ENCODE measurements at regions of chr19 and their contacts with region 1.

Region 1: GRCh38 chr19:48637170-48637947 is at the start of gene DBP:
- DNase-seq: peak; percentile 91 to 100 (median 100)
- ATAC-seq: peak; percentile 83
- H3K4me3 ChIP-seq: peak within 1 kb of the TSS; percentile 89
- H3K4me3 Mint-ChIP-seq: peak within 1 kb of the TSS; percentile 87 to 100 (median 98)
- H3K27ac ChIP-seq: peak within 1 kb of the TSS; percentile 90
- H3K27ac Mint-ChIP-seq: peak within 1 kb of the TSS; percentile 97 to 100 (median 98)
- H3K4me1 ChIP-seq: peaks cover 33 to 38% of the 10 kb centered on the region in 2 donors
- H3K4me1 Mint-ChIP-seq: peaks cover 13 to 46% (median 41%) of the 10 kb centered on the region in 7 donors
- H3K27me3 ChIP-seq: no peaks in the 10 kb centered on the region
- H3K27me3 Mint-ChIP-seq: peaks cover 0 to 8% (median 0%) of the 10 kb centered on the region in 5 donors
- total RNA-seq, gene DBP: 11.9 to 79.9 (median 33.2) TPM

Region 2: GRCh38 chr19:48170038-48170812 is 467.1 kb before region 1 on chr19 and contains the starts of genes LIG1 and ZSWIM9:
- CTCF ChIA-PET with region 1: no interaction called
- POLR2A ChIA-PET with region 1: no interaction called
- intact Hi-C with region 1: loop called in 1 of 2 experiments (anchors 2 kb)
- DNase-seq: peak; percentile 87 to 96 (median 94)
- ATAC-seq: peak; percentile 89
- H3K4me3 ChIP-seq: peak within 1 kb of the TSS; percentile 98
- H3K4me3 Mint-ChIP-seq: peak within 1 kb of the TSS; percentile 90 to 100 (median 97)
- H3K27ac ChIP-seq: peak within 1 kb of the TSS; percentile 94
- H3K27ac Mint-ChIP-seq: peak within 1 kb of the TSS; percentile 92 to 100 (median 97)
- H3K4me1 ChIP-seq: peaks cover 14 to 16% of the 10 kb centered on the region in 2 donors
- H3K4me1 Mint-ChIP-seq: peaks cover 20 to 44% (median 32%) of the 10 kb centered on the region in 7 donors
- H3K27me3 ChIP-seq: no peaks in the 10 kb centered on the region
- H3K27me3 Mint-ChIP-seq: no peaks in the 10 kb centered on the region
- total RNA-seq, gene LIG1: 61.0 to 134 (median 122) TPM
- total RNA-seq, gene ZSWIM9: 5.0 to 11.6 (median 7.4) TPM

Region 3: GRCh38 chr19:48398375-48399235 is 238.8 kb before region 1 on chr19:
- CTCF ChIA-PET with region 1: no interaction called
- POLR2A ChIA-PET with region 1: no interaction called
- intact Hi-C with region 1: loop called in 1 of 2 experiments (anchors 1 kb)
- DNase-seq: peak; percentile 77 to 88 (median 86)
- ATAC-seq: peak; percentile 90
- H3K4me3 ChIP-seq: peak overlapping the region; percentile 63
- H3K4me3 Mint-ChIP-seq: peak overlapping the region; percentile 54 to 96 (median 79)
- H3K27ac ChIP-seq: peak overlapping the region; percentile 59
- H3K27ac Mint-ChIP-seq: peak overlapping the region; percentile 22 to 97 (median 85)
- H3K4me1 ChIP-seq: peaks cover 17 to 29% of the 10 kb centered on the region in 2 donors
- H3K4me1 Mint-ChIP-seq: peaks cover 18 to 51% (median 41%) of the 10 kb centered on the region in 7 donors
- H3K27me3 ChIP-seq: peaks cover 9 to 21% of the 10 kb centered on the region in 2 donors
- H3K27me3 Mint-ChIP-seq: peaks cover 15 to 43% (median 31%) of the 10 kb centered on the region in 5 donors

Region 4: GRCh38 chr19:48624067-48624594 is 13.2 kb before region 1 on chr19:
- CTCF ChIA-PET with region 1: interaction called, 4 read pairs
- POLR2A ChIA-PET with region 1: interaction called, 73 read pairs
- intact Hi-C with region 1: loop called (anchors 1 kb)
- DNase-seq: peak; percentile 83 to 97 (median 87)
- ATAC-seq: peak; percentile 86
- H3K4me3 ChIP-seq: peak overlapping the region; percentile 29
- H3K4me3 Mint-ChIP-seq: peak overlapping the region; percentile 76 to 98 (median 88)
- H3K27ac ChIP-seq: peak overlapping the region; percentile 73
- H3K27ac Mint-ChIP-seq: peak overlapping the region; percentile 86 to 99 (median 92)
- H3K4me1 ChIP-seq: peaks cover 14 to 24% of the 10 kb centered on the region in 2 donors
- H3K4me1 Mint-ChIP-seq: peaks cover 31 to 51% (median 44%) of the 10 kb centered on the region in 7 donors
- H3K27me3 ChIP-seq: no peaks in the 10 kb centered on the region
- H3K27me3 Mint-ChIP-seq: no peaks in the 10 kb centered on the region

Region 5: GRCh38 chr19:48872182-48872883 is 235.0 kb after region 1 on chr19 and contains the start of gene PPP1R15A:
- CTCF ChIA-PET with region 1: no interaction called
- POLR2A ChIA-PET with region 1: no interaction called
- intact Hi-C with region 1: loop called in 1 of 2 experiments (anchors 1 kb)
- DNase-seq: peak; percentile 96 to 99 (median 98)
- ATAC-seq: peak; percentile 58
- H3K4me3 ChIP-seq: peak within 1 kb of the TSS; percentile 86
- H3K4me3 Mint-ChIP-seq: peak within 1 kb of the TSS; percentile 94 to 100 (median 98)
- H3K27ac ChIP-seq: peak within 1 kb of the TSS; percentile 99
- H3K27ac Mint-ChIP-seq: peak within 1 kb of the TSS; percentile 94 to 100 (median 99)
- H3K4me1 ChIP-seq: peaks cover 34 to 36% of the 10 kb centered on the region in 2 donors
- H3K4me1 Mint-ChIP-seq: peaks cover 31 to 51% (median 41%) of the 10 kb centered on the region in 7 donors
- H3K27me3 ChIP-seq: no peaks in the 10 kb centered on the region
- H3K27me3 Mint-ChIP-seq: peaks cover 0 to 14% (median 0%) of the 10 kb centered on the region in 5 donors
- total RNA-seq, gene PPP1R15A: 31.5 to 1,030 (median 71.9) TPM

Region 6: DNA sequence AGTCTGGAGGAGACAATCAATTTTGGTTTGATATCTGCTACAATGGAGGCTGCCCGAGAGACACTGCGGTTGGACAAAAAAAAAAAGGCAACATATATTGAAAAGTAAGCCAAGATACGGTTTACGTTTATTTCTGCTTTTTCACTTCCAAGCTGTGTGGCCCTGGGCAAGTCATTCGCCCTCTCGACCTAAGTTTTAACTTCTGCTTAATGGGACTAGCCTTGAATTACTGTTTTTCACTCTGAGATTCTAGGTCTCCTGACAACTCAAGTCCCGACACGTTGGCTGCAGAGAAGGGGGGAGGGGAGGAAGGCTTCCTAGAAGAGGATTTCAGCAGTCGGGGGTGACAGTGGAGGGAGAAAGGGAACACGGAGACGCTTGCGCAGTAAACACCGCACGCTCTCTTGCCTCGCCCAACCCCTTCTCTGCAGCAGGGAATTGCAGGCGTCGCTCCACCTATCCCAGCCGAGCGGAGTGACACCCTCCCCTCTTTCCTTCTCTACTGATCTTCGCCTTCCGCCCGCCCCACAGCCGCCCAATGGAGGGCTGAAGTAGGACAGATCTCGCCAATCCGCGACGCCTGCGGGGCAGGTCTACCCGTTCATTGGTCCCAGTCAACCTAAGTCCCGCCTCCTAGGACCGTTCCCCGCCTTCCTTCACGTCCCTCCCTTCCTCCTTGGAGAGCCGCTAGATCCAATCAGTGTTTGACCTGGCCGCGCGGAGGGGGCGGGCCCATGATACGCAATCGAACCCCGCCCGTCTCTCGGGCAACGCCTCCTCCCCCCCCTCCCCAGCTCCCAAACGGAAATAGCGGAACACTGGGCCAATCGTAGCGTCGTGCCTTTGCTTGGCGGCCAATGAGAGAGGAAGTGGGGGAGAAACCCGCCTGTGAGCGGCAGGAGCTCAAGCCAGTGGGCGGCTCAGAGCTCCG is 1128.9 kb after region 1 on chr19:
- CTCF ChIA-PET with region 1: no interaction called
- POLR2A ChIA-PET with region 1: no interaction called
- intact Hi-C with region 1: loop called in 1 of 2 experiments (anchors 2 kb)
- DNase-seq: peak; percentile 86 to 100 (median 99)
- ATAC-seq: peak; percentile 92
- H3K4me3 ChIP-seq: peak overlapping the region; percentile 79
- H3K4me3 Mint-ChIP-seq: peak overlapping the region; percentile 89 to 98 (median 96)
- H3K27ac ChIP-seq: peak overlapping the region; percentile 80
- H3K27ac Mint-ChIP-seq: peak overlapping the region; percentile 84 to 98 (median 96)
- H3K4me1 ChIP-seq: peaks cover 11 to 16% of the 10 kb centered on the region in 2 donors
- H3K4me1 Mint-ChIP-seq: peaks cover 15 to 43% (median 36%) of the 10 kb centered on the region in 7 donors
- H3K27me3 ChIP-seq: no peaks in the 10 kb centered on the region
- H3K27me3 Mint-ChIP-seq: no peaks in the 10 kb centered on the region